Heart right ventricle (tissue), 16 donors: ENCODE measurements at regions of chr4 and their contacts with region 1.

Region 1: GRCh38 chr4:181189751-181190150 is 1053.5 kb upstream of the TENM3 start:
- DNase-seq: no peak
- ATAC-seq: no peak
- H3K4me3 ChIP-seq: no peak overlapping the region
- H3K27ac ChIP-seq: no peak overlapping the region
- H3K4me1 ChIP-seq: no peaks in the 10 kb centered on the region
- H3K27me3 ChIP-seq: no peaks in the 10 kb centered on the region
- CTCF ChIP-seq: no peak

Region 2: GRCh38 chr4:181225616-181226261 is 36.0 kb after region 1 on chr4:
- intact Hi-C with region 1: loop called in 1 of 10 experiments (anchors 1 kb)
- DNase-seq: no peak
- ATAC-seq: no peak
- H3K4me3 ChIP-seq: no peak overlapping the region
- H3K27ac ChIP-seq: no peak overlapping the region
- H3K4me1 ChIP-seq: no peaks in the 10 kb centered on the region
- H3K27me3 ChIP-seq: no peaks in the 10 kb centered on the region
- CTCF ChIP-seq: no peak